Naive thymus-derived CD8-positive, alpha-beta T cell (primary cell): ENCODE measurements at regions of chr14 and their contacts with region 1.

Region 1: DNA sequence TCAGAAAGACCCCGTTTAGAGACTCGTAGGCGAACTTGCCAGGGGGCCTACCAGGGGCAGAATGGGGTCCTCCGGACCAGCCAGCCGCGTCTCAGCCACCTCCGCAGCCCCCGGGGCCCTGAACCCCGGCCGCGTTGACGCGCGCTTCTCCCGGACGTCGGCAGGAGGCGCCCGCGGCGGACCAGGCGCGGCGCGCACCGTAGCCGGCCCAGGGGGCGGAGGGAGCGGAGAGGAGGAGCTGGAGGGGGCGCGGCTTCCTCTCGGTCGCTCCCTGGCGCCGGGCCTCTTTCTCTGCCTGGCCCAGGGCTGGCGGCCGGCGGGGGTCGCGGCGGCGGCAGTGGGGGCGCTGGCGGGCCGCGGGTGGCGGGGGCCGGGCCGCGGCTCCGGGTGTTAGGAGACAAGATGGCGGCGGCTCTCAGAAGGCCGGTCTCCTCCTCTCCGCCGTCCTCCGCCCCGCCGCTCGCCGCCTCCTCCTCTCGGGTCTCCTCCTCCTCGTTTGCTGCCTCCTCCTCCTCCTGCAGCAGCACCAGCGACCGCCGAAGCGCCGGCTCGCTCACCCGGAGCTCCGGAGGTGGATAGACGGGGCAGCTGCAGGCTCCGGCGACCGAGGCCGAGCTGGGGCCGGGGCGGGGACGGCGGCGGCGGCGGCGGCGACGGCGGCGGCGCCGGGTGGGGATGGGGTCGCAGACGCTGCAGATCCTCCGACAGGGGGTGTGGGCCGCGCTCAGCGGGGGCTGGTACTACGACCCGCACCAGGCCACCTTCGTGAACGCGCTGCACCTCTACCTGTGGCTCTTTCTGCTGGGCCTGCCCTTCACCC is at the start of gene PCNX1:
- DNase-seq: peak; percentile 86 to 96 (median 90)
- ATAC-seq: peak; percentile 80
- H3K4me3 Mint-ChIP-seq: peak within 1 kb of the TSS; percentile 79 to 95 (median 92)
- H3K27ac Mint-ChIP-seq: peak within 1 kb of the TSS; percentile 96 to 99 (median 98)
- H3K4me1 Mint-ChIP-seq: peaks cover 18 to 62% (median 54%) of the 10 kb centered on the region in 4 donors
- H3K27me3 Mint-ChIP-seq: no peaks in the 10 kb centered on the region
- polyA plus RNA-seq, gene PCNX1: 5.5 to 8.3 (median 7.9) TPM

Region 2: DNA sequence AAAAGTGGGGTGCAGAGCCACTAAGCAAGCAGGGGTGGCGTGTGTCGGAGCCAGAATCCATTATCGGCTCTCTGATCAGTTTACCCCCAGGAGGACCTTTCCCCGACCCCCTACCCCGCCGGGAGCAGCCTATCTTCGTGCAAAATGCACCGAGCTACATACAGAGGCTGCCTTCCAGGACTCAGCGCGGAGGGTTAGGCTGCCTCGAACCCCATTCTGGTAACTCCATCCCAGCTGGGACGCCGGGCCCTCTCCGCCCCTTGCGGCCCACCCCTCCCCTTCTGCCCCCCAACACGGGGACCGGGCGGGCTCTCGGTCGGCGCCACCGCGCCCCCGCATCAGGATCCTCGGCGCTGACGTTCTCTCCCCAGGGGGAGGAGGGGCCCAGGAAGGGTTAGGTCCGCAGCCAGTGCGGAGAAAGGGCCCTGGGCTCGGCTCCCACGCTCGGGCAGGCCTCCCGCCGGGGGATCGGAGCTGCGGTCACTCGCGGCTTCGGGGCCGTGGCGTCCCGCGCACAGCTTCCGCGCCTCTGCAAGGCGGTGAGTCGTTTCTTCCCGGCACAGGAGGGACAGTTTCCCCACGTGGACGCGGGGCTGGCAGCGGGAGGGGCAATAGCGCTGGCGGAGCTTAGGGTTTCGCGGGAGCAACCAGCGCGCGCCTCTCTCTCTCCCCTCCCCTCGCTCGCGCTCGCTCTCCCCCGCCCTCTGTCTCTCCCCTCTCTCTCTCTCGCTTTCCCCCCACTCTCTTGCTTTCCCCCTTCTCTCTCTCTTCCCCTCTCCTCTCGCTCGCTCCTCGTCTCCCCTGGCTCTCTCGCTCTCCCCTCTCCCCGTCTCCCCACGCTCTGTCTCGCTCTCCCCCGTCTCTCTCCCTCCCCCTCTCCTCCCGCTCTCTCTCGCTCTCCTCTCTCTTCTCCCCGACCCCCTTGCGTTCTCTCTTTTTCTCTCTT is 85.5 kb before region 1 on chr14:
- POLR2A ChIA-PET with region 1: interaction called, 14 read pairs
- DNase-seq: peak; percentile 13 to 67 (median 47)
- ATAC-seq: peak; percentile 52 to 66
- H3K4me3 Mint-ChIP-seq: peak overlapping the region; percentile 71 to 90 (median 82)
- H3K27ac Mint-ChIP-seq: peak overlapping the region in 4 of 10 donors; percentile 43 to 87 (median 72)
- H3K4me1 Mint-ChIP-seq: peaks cover 9 to 19% (median 16%) of the 10 kb centered on the region in 4 donors
- H3K27me3 Mint-ChIP-seq: peaks cover 0 to 37% (median 9%) of the 10 kb centered on the region in 5 donors

Region 3: DNA sequence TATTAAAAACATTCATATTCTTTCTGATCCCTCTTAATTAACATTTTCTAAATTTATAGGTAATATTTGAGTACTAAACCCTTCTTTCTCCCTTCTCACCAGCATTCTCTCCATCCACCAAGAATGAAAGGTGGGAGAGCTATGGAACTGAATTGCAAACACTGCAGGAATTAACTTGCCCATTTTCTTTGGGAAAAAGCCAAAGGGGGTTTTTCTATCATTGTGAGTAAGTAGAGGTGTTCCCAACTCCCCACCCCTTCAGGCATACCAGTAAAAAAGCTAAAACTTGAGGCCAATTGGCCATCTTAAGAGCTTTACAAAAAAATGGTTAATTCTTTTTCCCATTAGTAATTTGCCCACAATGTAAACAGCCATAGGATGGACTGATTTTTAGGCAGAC is 23.6 kb after region 1 on chr14:
- POLR2A ChIA-PET with region 1: interaction called, 10 read pairs
- DNase-seq: no peak
- ATAC-seq: no peak
- H3K4me3 Mint-ChIP-seq: no peak overlapping the region
- H3K27ac Mint-ChIP-seq: peak overlapping the region in 4 of 10 donors; percentile 50 to 74 (median 64)
- H3K4me1 Mint-ChIP-seq: peaks cover 35 to 78% (median 69%) of the 10 kb centered on the region in 4 donors
- H3K27me3 Mint-ChIP-seq: no peaks in the 10 kb centered on the region

Region 4: DNA sequence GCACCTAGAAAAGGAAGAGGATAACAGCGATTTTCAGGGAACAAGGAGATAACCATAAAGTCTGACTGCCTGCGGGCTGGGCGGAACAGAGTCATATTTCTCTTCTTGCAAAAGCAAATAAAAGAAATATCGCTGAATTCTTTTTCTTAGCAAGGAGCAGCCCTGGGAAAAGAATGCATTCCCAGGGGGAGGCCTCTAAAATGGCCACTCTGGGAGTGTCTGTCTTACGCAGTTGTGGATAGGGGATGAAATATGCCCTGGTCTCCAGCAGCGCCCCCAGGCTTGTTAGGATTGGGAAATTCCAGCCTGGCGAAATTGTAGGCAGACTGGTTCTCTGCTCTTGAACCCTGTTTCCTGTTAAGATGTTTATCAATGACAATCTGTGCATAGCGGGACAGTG is 40.3 kb after region 1 on chr14:
- POLR2A ChIA-PET with region 1: interaction called, 71 read pairs
- DNase-seq: no peak
- ATAC-seq: no peak
- H3K4me3 Mint-ChIP-seq: peak overlapping the region in 1 of 10 donors; percentile 3
- H3K27ac Mint-ChIP-seq: peak overlapping the region in 2 of 10 donors; percentile 63
- H3K4me1 Mint-ChIP-seq: peaks cover 12 to 29% (median 27%) of the 10 kb centered on the region in 4 donors
- H3K27me3 Mint-ChIP-seq: no peaks in the 10 kb centered on the region

Region 5: GRCh38 chr14:70972107-70972976 is 65.0 kb after region 1 on chr14:
- POLR2A ChIA-PET with region 1: interaction called, 11 read pairs
- DNase-seq: peak; percentile 64 to 90 (median 78)
- ATAC-seq: peak; percentile 79 to 86
- H3K4me3 Mint-ChIP-seq: no peak overlapping the region
- H3K27ac Mint-ChIP-seq: peak overlapping the region; percentile 11 to 79 (median 54)
- H3K4me1 Mint-ChIP-seq: peaks cover 20 to 57% (median 38%) of the 10 kb centered on the region in 4 donors
- H3K27me3 Mint-ChIP-seq: no peaks in the 10 kb centered on the region